ENCODE measurements at regions of chr18 and their contacts with region 1.

Region 1: GRCh38 chr18:41982942-41983660 is 28.1 kb downstream of the PIK3C3 start:
- DNase-seq: no peak
- H3K4me3 Mint-ChIP-seq: peak overlapping the region; percentile 13
- H3K27ac Mint-ChIP-seq: peak overlapping the region; percentile 78
- H3K4me1 Mint-ChIP-seq: peaks cover 34% of the 10 kb centered on the region
- H3K27me3 Mint-ChIP-seq: no peaks in the 10 kb centered on the region

Region 2: DNA sequence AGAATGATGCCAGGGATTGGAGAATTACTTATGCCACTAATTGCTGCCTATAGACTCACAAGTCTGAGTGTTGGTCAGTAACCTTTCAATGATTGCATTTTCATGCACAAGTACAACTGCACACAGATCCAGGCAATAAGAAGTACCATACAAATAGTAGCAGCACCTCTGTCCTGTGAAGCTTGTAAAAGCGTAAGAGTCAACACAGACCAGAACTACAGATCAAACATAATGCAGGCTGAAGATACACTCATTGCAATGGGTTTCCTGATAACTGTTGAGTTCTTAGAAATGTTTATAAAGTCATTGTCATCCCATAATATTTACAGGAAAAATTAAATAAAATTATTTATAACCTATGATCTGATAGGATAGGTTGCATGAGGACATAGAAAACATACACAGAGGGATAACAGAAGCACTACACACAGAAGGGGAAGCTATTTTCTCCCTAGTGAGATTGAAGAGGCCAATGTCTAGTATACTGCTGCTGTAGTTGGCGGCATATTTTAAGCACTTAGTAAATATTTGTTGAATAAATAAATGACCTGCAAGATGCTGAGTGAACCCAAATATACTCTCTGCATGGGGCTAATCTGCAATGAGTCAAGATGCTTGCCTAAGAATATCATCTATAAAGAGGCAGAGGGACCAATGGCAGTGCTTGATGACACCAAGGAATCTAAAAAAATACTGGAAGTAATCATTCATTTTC is 33.7 kb before region 1 on chr18:
- CTCF ChIA-PET with region 1: no interaction called
- intact Hi-C with region 1: loop called (anchors 1 kb)
- DNase-seq: no peak
- H3K4me3 Mint-ChIP-seq: no peak overlapping the region
- H3K27ac Mint-ChIP-seq: no peak overlapping the region
- H3K4me1 Mint-ChIP-seq: peaks cover 17% of the 10 kb centered on the region
- H3K27me3 Mint-ChIP-seq: peaks cover 11% of the 10 kb centered on the region

Region 3: GRCh38 chr18:41954827-41955613 is 28.1 kb before region 1 on chr18 and contains the start of gene PIK3C3:
- CTCF ChIA-PET with region 1: no interaction called
- intact Hi-C with region 1: loop called (anchors 1 kb)
- DNase-seq: peak; percentile 97
- H3K4me3 Mint-ChIP-seq: peak within 1 kb of the TSS; percentile 100
- H3K27ac Mint-ChIP-seq: peak within 1 kb of the TSS; percentile 97
- H3K4me1 Mint-ChIP-seq: peaks cover 32% of the 10 kb centered on the region
- H3K27me3 Mint-ChIP-seq: peaks cover 2% of the 10 kb centered on the region
- total RNA-seq, gene PIK3C3: 35.3 to 35.4 TPM

Region 4: DNA sequence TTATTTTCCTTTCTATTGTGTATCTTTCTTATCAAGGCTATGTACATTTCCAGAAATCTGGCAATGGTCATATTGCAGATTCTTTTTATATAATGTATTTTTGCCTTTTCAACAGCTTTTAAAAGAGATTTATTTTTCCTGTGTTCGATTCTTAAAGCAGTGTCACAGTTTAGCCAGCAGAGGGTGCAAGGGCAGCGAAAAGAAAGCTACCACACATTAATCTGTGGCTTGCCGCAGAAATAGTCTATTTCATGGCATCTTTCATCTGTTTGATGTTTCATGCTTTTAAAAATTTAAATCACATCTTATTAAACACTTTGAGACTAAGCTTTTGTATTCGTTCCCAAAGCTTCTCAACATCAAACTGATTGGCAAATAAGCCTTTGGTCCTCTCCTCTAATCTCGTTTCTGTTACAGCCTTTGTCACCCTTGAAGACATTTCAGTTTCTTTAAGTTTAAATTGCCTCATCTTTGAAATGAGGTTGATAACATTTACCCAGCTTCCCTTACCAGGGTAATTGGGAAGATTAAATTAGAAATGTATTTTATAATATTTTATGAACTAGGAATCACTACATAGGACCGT is 45.2 kb after region 1 on chr18:
- CTCF ChIA-PET with region 1: interaction called, 7 read pairs
- intact Hi-C with region 1: loop called (anchors 1 kb)
- DNase-seq: peak; percentile 47
- H3K4me3 Mint-ChIP-seq: no peak overlapping the region
- H3K27ac Mint-ChIP-seq: no peak overlapping the region
- H3K4me1 Mint-ChIP-seq: peaks cover 23% of the 10 kb centered on the region
- H3K27me3 Mint-ChIP-seq: no peaks in the 10 kb centered on the region